Dendritic cell treated with granulocyte-macrophage colony-stimulating factor and Interleukin-4, amounts not matched to agents 40 ng/mL and 50 ng/mL, for 4 days (primary cell): ENCODE measurements at regions of chr20 and their contacts with region 1.

Region 1: DNA sequence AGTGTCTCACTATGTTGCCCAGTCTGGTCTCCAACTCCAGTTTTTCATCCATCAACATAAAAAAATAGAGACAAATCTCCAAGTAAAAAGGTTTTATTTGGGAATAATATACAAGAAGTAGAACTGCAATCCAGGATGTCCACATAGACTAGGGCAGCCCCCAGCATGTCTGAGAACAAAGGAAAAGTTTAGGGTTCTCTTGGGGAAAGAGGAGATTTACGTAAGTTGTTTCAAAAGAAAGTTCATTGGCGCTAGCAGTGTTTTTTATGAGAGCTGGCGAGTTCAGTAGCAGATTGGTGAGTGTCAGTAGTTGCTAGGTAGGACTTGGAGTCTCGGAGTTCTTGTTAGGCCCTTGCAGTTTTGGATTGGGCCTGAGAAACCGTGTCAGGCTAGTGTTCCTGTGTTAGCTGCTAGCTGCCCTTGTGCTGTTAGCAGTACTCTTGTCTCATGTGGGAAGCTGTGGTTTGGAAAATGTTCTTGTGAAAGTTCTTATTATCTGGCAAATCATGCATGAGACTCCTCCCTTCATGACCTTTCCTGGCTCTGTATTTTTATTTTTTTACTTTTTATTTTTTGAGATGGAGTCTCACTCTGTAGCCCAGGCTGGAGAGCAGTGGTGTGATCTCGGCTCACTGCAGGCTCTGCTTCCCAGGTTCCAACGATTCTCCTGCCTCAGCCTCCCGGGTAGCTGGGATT is 24.7 kb downstream of the TTLL9 start:
- H3K4me3 Mint-ChIP-seq: no peak overlapping the region
- H3K27ac Mint-ChIP-seq: peak overlapping the region; percentile 85
- H3K4me1 Mint-ChIP-seq: peaks cover 4% of the 10 kb centered on the region
- H3K27me3 Mint-ChIP-seq: peaks cover 4% of the 10 kb centered on the region

Region 2: GRCh38 chr20:31861346-31862156 is 33.6 kb before region 1 on chr20:
- intact Hi-C with region 1: no loop called
- H3K4me3 Mint-ChIP-seq: peak overlapping the region; percentile 42
- H3K27ac Mint-ChIP-seq: no peak overlapping the region
- H3K4me1 Mint-ChIP-seq: peaks cover 12% of the 10 kb centered on the region
- H3K27me3 Mint-ChIP-seq: peaks cover 50% of the 10 kb centered on the region

Region 3: GRCh38 chr20:31879143-31879987 is 15.8 kb before region 1 on chr20:
- intact Hi-C with region 1: loop called (anchors 1 kb)
- H3K4me3 Mint-ChIP-seq: peak overlapping the region; percentile 90
- H3K27ac Mint-ChIP-seq: peak overlapping the region; percentile 89
- H3K4me1 Mint-ChIP-seq: peaks cover 7% of the 10 kb centered on the region
- H3K27me3 Mint-ChIP-seq: peaks cover 2% of the 10 kb centered on the region